Lower leg skin (tissue), 4 donors: ENCODE measurements at regions of chr11 and their contacts with region 1.

Region 1: GRCh38 chr11:57421805-57422204 is 5.1 kb downstream of the SLC43A3 start:
- DNase-seq: no peak
- H3K4me3 ChIP-seq: no peak overlapping the region
- CTCF ChIP-seq: no peak
- POLR2A ChIP-seq: no peak

Region 2: DNA sequence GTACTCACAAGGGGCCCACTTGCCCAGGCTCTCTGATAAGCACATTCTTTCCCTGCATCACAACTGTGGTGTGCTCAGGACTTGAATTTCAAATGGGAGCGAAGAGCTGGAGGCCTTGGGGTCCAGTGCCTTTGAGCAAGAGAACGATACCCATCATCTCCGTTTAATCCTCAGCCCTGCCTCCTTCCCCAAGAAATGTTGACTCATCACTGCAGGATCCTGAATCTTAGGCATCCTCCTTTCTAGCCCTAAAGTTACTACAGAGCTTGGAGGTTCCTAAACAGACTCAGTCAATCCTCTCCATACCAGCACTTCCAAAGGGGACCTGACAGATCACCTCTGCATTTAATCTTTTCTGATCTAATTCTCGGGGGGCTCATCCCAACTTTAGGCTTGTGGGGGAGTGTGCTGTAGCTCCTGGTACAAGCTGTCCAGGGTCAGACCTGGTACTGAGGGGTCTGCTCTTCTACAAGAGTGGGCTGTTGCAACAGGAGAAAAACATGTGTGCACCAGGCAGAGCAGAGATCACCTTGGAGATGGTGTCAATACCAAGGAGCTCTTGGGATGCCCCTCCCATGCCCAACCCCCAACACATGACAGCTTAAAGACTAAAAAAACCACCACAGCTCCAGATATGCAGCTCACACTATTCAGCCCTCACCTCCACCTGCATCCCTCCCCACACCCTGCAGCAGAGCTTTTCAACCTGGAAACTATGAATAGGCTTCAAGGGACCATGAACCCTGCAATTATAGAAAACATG is 27.4 kb before region 1 on chr11:
- intact Hi-C with region 1: loop called (anchors 2 kb)
- DNase-seq: no peak
- H3K4me3 ChIP-seq: no peak overlapping the region
- CTCF ChIP-seq: no peak
- POLR2A ChIP-seq: no peak

Region 3: DNA sequence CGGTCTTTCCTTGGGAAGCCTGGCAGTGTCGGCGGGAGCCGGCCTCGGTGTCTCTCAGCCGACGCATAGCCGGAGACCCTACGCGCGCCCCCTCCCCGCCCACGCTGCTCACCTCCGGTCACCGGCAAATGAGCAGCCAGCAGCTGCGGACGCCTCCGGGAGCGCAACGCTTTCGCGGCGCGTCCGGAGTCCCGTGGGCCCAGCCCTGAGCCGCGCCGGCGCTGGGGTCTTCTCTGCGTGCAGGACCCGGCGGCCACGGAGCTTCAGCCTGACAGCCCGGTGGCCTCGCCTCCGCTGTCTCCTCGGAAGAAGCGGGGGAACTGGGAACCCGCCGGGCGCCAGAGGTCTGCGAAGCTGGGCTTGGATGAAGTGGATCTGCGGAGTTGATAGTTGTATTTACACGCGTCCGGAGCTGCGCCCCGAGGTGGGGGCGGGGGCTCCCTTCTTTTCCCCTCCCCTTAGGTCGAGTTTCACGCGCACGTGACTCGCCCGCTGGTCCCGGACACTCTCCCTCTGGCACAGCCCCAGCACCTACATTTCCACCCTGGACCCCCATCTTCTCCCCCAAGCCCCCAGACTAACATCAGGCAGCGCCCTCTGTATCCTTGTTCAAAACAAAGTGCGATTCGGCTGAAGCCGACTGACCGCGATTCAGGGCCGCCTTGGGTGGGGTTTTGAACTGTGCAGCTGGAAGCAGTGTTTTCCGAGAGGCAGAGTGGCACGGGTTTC is 93.7 kb after region 1 on chr11 and contains the start of gene SLC43A1:
- intact Hi-C with region 1: no loop called
- DNase-seq: peak in 1 of 2 donors; percentile 95
- H3K4me3 ChIP-seq: peak within 1 kb of the TSS; percentile 79
- CTCF ChIP-seq: no peak
- POLR2A ChIP-seq: no peak
- total RNA-seq, gene SLC43A1: 15.9 to 20.2 (median 18.3) TPM

Region 4: GRCh38 chr11:57964660-57965059 is 542.9 kb after region 1 on chr11:
- intact Hi-C with region 1: no loop called
- DNase-seq: no peak
- H3K4me3 ChIP-seq: no peak overlapping the region
- CTCF ChIP-seq: no peak
- POLR2A ChIP-seq: no peak